ENCODE measurements at regions of chr1 and their contacts with region 1.

Region 1: GRCh38 chr1:1471389-1472052 is at the start of gene ATAD3B:
- DNase-seq: peak; percentile 87 to 92 (median 87)
- H3K4me3 ChIP-seq: peak within 1 kb of the TSS; percentile 54 to 83
- H3K4me3 Mint-ChIP-seq: peak within 1 kb of the TSS; percentile 84 to 97 (median 91)
- H3K27ac ChIP-seq: peak within 1 kb of the TSS; percentile 56
- H3K27ac Mint-ChIP-seq: peak within 1 kb of the TSS; percentile 77 to 99 (median 93)
- H3K4me1 ChIP-seq: peaks cover 24% of the 10 kb centered on the region
- H3K4me1 Mint-ChIP-seq: peaks cover 8 to 38% (median 19%) of the 10 kb centered on the region in 4 donors
- H3K27me3 ChIP-seq: no peaks in the 10 kb centered on the region
- H3K27me3 Mint-ChIP-seq: no peaks in the 10 kb centered on the region
- total RNA-seq, gene ATAD3B: 51.1 to 53.8 TPM

Region 2: GRCh38 chr1:1406817-1407635 is 64.5 kb before region 1 on chr1 and contains the start of gene MRPL20:
- CTCF ChIA-PET with region 1: no interaction called
- POLR2A ChIA-PET with region 1: no interaction called
- intact Hi-C with region 1: loop called (anchors 1 kb)
- DNase-seq: peak; percentile 93 to 96 (median 95)
- H3K4me3 ChIP-seq: peak within 1 kb of the TSS; percentile 76 to 95
- H3K4me3 Mint-ChIP-seq: peak within 1 kb of the TSS; percentile 90 to 96 (median 94)
- H3K27ac ChIP-seq: peak within 1 kb of the TSS; percentile 93
- H3K27ac Mint-ChIP-seq: peak within 1 kb of the TSS; percentile 80 to 97 (median 95)
- H3K4me1 ChIP-seq: peaks cover 30% of the 10 kb centered on the region
- H3K4me1 Mint-ChIP-seq: peaks cover 13 to 51% (median 33%) of the 10 kb centered on the region in 4 donors
- H3K27me3 ChIP-seq: no peaks in the 10 kb centered on the region
- H3K27me3 Mint-ChIP-seq: no peaks in the 10 kb centered on the region
- total RNA-seq, gene MRPL20: 119 to 123 TPM

Region 3: DNA sequence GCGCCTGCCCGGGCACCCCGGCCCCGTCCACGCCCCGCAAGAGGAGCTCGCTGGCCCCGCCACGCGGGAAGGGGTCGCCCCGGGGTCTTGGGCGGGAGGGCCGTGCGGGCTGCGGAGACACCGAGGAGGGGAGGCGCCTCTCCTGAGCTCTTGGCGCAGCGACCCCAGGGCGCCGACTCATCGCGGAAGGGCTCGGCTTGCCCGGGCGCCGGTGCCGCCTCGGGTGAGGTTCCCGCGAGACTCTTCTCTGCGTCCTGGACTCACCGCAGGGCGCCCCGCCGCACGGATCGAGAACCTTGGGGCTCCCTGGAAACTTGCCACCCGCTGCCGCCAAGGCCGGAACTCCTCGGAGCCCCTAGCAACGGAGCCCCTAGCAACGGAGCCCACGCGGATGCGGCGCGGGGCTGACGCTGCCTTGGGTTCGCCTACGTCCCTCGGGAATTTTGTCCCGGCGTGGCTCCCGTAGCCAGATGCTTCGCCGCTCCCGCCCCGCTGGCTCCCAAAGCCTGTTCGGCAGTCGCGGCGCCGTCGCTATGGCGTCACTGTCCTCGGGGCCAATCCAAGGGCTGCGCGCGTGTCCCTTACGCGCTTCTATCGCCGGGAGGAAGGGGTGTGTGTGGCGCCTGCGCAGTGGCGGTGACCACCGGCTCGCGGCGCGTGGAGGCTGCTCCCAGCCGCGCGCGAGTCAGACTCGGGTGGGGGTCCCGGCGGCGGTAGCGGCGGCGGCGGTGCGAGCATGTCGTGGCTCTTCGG is 40.2 kb after region 1 on chr1 and contains the start of gene ATAD3A:
- CTCF ChIA-PET with region 1: no interaction called
- POLR2A ChIA-PET with region 1: no interaction called
- intact Hi-C with region 1: loop called (anchors 2 kb)
- DNase-seq: peak; percentile 94 to 95 (median 94)
- H3K4me3 ChIP-seq: peak within 1 kb of the TSS; percentile 73 to 91
- H3K4me3 Mint-ChIP-seq: peak within 1 kb of the TSS; percentile 90 to 96 (median 93)
- H3K27ac ChIP-seq: peak within 1 kb of the TSS; percentile 94
- H3K27ac Mint-ChIP-seq: peak within 1 kb of the TSS; percentile 91 to 98 (median 96)
- H3K4me1 ChIP-seq: peaks cover 6% of the 10 kb centered on the region
- H3K4me1 Mint-ChIP-seq: peaks cover 5 to 19% (median 11%) of the 10 kb centered on the region in 4 donors
- H3K27me3 ChIP-seq: no peaks in the 10 kb centered on the region
- H3K27me3 Mint-ChIP-seq: no peaks in the 10 kb centered on the region
- total RNA-seq, gene ATAD3A: 23.0 to 24.7 TPM

Region 4: GRCh38 chr1:1683104-1683905 is 211.8 kb after region 1 on chr1:
- CTCF ChIA-PET with region 1: no interaction called
- POLR2A ChIA-PET with region 1: no interaction called
- intact Hi-C with region 1: no loop called
- DNase-seq: no peak
- H3K4me3 ChIP-seq: no peak overlapping the region
- H3K4me3 Mint-ChIP-seq: no peak overlapping the region
- H3K27ac ChIP-seq: no peak overlapping the region
- H3K27ac Mint-ChIP-seq: peak overlapping the region in 3 of 7 donors; percentile 18 to 37 (median 36)
- H3K4me1 ChIP-seq: peaks cover 15% of the 10 kb centered on the region
- H3K4me1 Mint-ChIP-seq: peaks cover 18 to 45% (median 23%) of the 10 kb centered on the region in 4 donors
- H3K27me3 ChIP-seq: no peaks in the 10 kb centered on the region
- H3K27me3 Mint-ChIP-seq: no peaks in the 10 kb centered on the region

Measured in CD4-positive, alpha-beta memory T cell (primary cell).